Gastrocnemius medialis (tissue), 4 donors: ENCODE measurements at regions of chr17 and their contacts with region 1.

Region 1: GRCh38 chr17:81428948-81429774 is 33.9 kb downstream of the BAHCC1 start:
- DNase-seq: peak in 1 of 2 donors; percentile 59
- ATAC-seq: peak; percentile 19 to 21
- H3K4me3 ChIP-seq: peak overlapping the region; percentile 0 to 30 (median 14)
- H3K27ac ChIP-seq: peak overlapping the region; percentile 75 to 94 (median 85)
- H3K4me1 ChIP-seq: peaks cover 39 to 44% of the 10 kb centered on the region in 2 donors
- H3K27me3 ChIP-seq: no peaks in the 10 kb centered on the region
- CTCF ChIP-seq: no peak
- POLR2A ChIP-seq: no peak

Region 2: GRCh38 chr17:81401723-81402529 is 27.2 kb before region 1 on chr17:
- in situ Hi-C with region 1: no loop called
- intact Hi-C with region 1: loop called (anchors 2 kb)
- DNase-seq: peak in 1 of 2 donors; percentile 54
- ATAC-seq: no peak
- H3K4me3 ChIP-seq: peak overlapping the region in 1 of 4 donors; percentile 28
- H3K27ac ChIP-seq: peak overlapping the region; percentile 98 to 99 (median 99)
- H3K4me1 ChIP-seq: peaks cover 57 to 74% of the 10 kb centered on the region in 2 donors
- H3K27me3 ChIP-seq: no peaks in the 10 kb centered on the region
- CTCF ChIP-seq: peak in 1 of 5 experiments; percentile 39
- POLR2A ChIP-seq: no peak